ENCODE measurements at regions of chr9 and their contacts with region 1.

Region 1: DNA sequence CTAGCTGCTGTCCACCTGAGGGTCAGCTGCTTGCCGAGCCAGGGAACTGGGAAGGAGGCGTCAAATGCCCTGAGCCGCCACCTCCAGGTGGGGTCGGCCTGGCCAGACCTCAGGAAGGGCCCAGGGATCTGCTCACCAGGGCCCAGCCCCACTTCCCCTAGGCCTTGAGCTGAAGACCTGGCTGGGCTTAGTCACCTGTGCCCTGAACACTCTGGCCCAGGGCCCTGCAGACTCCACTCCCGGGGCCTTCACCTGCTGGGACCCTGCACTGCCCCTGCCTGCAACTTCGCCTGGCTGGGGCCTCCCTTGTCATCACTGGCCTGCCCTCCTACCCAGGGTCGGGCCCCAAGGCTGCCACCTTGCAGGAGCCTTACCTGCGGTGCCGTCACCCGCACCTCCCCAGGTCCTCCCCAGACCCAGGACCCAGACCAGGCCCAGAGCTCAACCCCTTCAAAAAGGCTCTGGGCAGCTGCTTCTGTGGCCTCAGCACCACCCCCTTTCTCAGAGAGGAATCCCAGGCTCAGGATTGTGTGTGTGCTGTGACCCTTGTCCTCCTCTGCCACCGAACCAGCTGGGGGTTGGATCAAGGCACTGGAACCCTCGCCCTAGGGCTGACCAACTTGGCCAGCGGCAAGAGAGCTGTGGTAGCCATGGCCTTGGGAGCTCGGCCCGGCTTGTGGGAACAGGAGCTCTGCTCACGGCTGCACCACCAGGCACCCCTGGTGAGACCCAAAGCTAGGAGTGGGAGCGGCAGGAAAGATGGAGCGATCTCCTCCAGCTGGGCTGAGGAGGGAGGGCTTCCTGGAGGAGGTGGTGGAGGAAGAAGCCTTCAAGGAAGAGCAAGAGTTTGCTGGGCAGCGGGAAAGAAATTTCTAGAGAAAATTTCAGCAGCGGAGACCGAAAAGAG is 1.2 kb upstream of the NELFB start:
- DNase-seq: no peak
- ATAC-seq: peak in 1 of 8 donors; percentile 5
- H3K4me3 ChIP-seq: peak overlapping the region; percentile 60 to 100 (median 98)
- H3K27ac ChIP-seq: peak overlapping the region in 9 of 10 donors; percentile 75 to 94 (median 85)
- H3K4me1 ChIP-seq: peaks cover 15 to 46% (median 35%) of the 10 kb centered on the region in 9 donors
- H3K27me3 ChIP-seq: no peaks in the 10 kb centered on the region
- CTCF ChIP-seq: no peak

Region 2: GRCh38 chr9:137240861-137241489 is 13.0 kb before region 1 on chr9 and contains the start of gene TUBB4B:
- intact Hi-C with region 1: loop called in 1 of 10 experiments (anchors 1 kb)
- DNase-seq: peak; percentile 99 to 100
- ATAC-seq: peak; percentile 85 to 94 (median 89)
- H3K4me3 ChIP-seq: peak within 1 kb of the TSS; percentile 75 to 97 (median 92)
- H3K27ac ChIP-seq: peak within 1 kb of the TSS; percentile 91 to 100 (median 98)
- H3K4me1 ChIP-seq: peaks cover 16 to 71% (median 53%) of the 10 kb centered on the region in 9 donors
- H3K27me3 ChIP-seq: no peaks in the 10 kb centered on the region
- CTCF ChIP-seq: no peak
- total RNA-seq, gene TUBB4B: 211 to 495 (median 330) TPM